Activated CD4-positive, alpha-beta T cell treated with anti-CD3 and anti-CD28 coated beads for 36 hours (primary cell): ENCODE measurements at regions of chr12 and their contacts with region 1.

Region 1: DNA sequence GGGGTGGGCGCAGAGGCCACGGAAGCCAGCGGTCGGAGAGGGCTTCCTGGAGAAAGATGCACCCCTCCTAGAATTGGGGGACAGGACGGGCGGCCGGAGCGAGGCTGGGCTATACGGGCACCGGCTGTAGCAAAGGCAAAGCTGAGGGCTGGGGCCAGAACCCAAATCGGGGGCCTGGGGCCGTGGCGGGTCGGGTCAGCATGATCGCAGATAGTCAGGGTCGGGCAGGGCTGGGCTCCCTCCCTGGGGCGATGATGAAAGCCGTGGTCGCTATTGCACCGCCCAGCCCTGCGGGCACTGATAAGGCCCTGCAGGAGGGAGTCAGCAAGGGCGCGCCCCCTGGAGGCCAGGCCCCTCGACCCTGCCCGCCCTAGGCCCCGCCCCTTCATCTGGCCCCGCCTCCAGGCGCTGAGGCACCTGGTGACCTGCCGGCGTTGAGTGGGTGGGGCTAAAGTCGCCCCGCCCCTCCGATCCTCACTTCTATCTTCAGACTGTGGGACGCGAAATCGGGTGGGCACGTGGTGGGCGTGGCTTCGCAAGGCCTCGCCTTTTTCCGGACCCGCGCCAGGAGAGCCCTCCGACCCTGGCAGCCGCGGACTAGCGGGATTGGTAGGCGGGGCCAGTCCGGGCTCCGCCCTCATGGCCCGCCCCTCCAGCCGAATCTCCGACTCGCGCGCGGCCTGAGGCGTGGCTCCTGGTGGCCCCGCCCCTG is 418 bp upstream of the SH2B3 start:
- DNase-seq: peak; percentile 100
- ATAC-seq: peak; percentile 77
- H3K4me3 Mint-ChIP-seq: peak overlapping the region; percentile 76
- H3K27ac Mint-ChIP-seq: peak overlapping the region; percentile 96
- H3K4me1 Mint-ChIP-seq: peaks cover 51% of the 10 kb centered on the region
- H3K27me3 Mint-ChIP-seq: no peaks in the 10 kb centered on the region

Region 2: DNA sequence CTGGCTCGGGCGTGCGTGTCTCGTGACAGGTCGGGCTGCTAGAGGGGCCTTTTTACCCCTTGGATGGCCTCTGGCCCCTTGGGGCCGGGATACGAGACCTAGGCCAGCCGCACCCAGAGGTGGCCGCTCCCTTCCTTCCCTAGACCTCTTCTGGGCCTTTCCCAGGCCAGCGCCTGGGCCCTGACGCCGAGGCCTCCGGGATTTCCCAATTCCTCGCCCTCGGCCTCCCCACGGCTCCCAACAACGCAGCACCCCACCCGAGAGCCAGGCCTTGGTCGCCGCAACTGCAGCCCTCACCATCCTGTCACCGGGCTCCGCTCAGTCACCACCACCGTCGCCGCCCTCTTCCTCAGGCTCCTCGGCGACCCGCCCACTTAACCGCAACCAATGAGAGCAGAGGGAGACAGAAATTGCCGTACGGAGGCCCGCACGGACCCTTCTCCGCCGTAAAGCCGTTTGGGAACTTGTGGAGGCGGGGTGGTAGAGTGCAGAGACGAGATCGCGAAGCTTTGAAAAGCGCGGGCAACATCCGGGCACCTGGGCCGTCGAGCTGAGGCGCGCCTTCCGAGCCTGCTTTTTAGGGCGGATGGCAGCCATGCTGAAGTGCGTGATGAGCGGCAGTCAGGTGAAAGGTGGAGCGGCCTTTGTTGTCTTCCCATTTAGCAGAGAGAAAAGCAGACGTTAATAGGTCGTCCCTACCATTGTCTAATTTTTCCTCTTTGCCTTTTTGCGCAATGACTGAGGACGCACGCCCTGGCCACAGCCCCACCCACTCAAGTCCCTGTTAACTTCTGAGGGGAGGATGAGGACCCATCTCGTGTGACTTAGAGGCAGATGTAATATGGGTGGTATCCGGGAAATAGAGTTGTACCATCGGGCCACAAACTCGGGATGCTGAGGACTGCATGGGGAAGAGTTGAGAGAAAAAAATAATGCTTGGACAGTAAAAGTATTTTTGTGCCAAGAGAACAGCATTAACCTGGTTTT is 903.3 kb before region 1 on chr12 and contains the starts of genes RAD9B and VPS29:
- CTCF ChIA-PET with region 1: no interaction called
- POLR2A ChIA-PET with region 1: no interaction called
- intact Hi-C with region 1: loop called (anchors 1 to 10 kb)
- DNase-seq: peak; percentile 100
- ATAC-seq: peak; percentile 97
- H3K4me3 Mint-ChIP-seq: peak within 1 kb of the TSS; percentile 95
- H3K27ac Mint-ChIP-seq: peak within 1 kb of the TSS; percentile 94
- H3K4me1 Mint-ChIP-seq: peaks cover 28% of the 10 kb centered on the region
- H3K27me3 Mint-ChIP-seq: no peaks in the 10 kb centered on the region
- total RNA-seq, gene RAD9B: 1.5 to 2.2 TPM
- total RNA-seq, gene VPS29: 84.4 to 103 TPM

Region 3: GRCh38 chr12:111434680-111435338 is 29.5 kb after region 1 on chr12:
- CTCF ChIA-PET with region 1: interaction called, 10 read pairs
- POLR2A ChIA-PET with region 1: interaction called, 7 read pairs
- intact Hi-C with region 1: loop called (anchors 1 kb)
- DNase-seq: peak; percentile 88
- ATAC-seq: peak; percentile 80
- H3K4me3 Mint-ChIP-seq: peak overlapping the region; percentile 35
- H3K27ac Mint-ChIP-seq: peak overlapping the region; percentile 81
- H3K4me1 Mint-ChIP-seq: peaks cover 89% of the 10 kb centered on the region
- H3K27me3 Mint-ChIP-seq: no peaks in the 10 kb centered on the region

Region 4: GRCh38 chr12:111546758-111547383 is 141.6 kb after region 1 on chr12:
- CTCF ChIA-PET with region 1: no interaction called
- POLR2A ChIA-PET with region 1: no interaction called
- intact Hi-C with region 1: loop called (anchors 2 to 5 kb)
- DNase-seq: peak; percentile 57
- ATAC-seq: peak; percentile 90
- H3K4me3 Mint-ChIP-seq: peak overlapping the region; percentile 13
- H3K27ac Mint-ChIP-seq: peak overlapping the region; percentile 81
- H3K4me1 Mint-ChIP-seq: peaks cover 28% of the 10 kb centered on the region
- H3K27me3 Mint-ChIP-seq: no peaks in the 10 kb centered on the region

Region 5: DNA sequence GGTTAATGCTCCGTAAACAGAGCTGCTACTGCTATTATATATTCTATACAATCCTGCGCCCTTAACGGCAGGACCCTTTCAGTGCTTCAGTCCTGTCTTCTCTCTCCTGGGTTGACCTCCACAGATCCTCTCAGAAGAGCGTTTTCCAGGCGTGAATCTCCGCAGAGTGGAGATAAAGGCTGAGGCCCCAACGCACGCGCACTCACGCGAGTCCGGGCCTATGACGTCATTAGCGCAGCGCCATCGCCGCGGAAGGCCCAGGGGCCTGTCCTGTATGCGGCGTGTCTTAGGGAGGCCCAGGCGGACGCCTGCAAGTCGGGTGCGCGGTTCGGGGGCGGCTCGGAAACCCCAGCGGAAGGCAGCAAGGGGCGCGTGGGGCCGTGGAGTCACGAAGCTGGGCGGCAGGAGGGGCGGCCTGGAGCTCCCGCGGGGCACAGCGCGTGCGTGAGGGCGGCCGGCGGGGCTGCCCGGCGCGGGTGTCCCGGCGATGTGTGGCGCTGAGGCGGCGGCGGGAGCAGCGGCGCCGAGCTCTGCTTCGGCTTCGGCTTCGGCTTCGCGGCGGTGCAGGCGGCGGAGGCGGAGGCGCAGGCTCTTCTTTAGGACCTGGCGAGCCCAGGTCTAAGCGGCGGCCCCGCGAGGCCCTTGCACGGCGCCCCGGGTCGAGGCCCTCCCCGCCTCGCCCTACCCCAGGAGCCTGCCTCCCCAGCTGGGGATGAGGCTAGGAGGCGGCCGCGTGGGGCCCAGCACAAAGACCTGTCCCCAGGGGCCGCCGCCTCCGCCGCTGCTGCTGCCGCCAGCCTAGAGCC is 436.6 kb after region 1 on chr12 and contains the start of gene MAPKAPK5:
- CTCF ChIA-PET with region 1: no interaction called
- POLR2A ChIA-PET with region 1: no interaction called
- intact Hi-C with region 1: loop called in 1 of 2 experiments (anchors 1 kb)
- DNase-seq: peak; percentile 97
- ATAC-seq: peak; percentile 81
- H3K4me3 Mint-ChIP-seq: peak within 1 kb of the TSS; percentile 87
- H3K27ac Mint-ChIP-seq: peak within 1 kb of the TSS; percentile 96
- H3K4me1 Mint-ChIP-seq: peaks cover 50% of the 10 kb centered on the region
- H3K27me3 Mint-ChIP-seq: no peaks in the 10 kb centered on the region
- total RNA-seq, gene MAPKAPK5: 47.5 to 57.5 TPM

Region 6: GRCh38 chr12:112108201-112109079 is 703.1 kb after region 1 on chr12 and contains the start of gene NAA25:
- CTCF ChIA-PET with region 1: no interaction called
- POLR2A ChIA-PET with region 1: no interaction called
- intact Hi-C with region 1: loop called in 1 of 2 experiments (anchors 5 kb)
- DNase-seq: peak; percentile 94
- ATAC-seq: peak; percentile 80
- H3K4me3 Mint-ChIP-seq: peak within 1 kb of the TSS; percentile 97
- H3K27ac Mint-ChIP-seq: peak within 1 kb of the TSS; percentile 99
- H3K4me1 Mint-ChIP-seq: peaks cover 55% of the 10 kb centered on the region
- H3K27me3 Mint-ChIP-seq: no peaks in the 10 kb centered on the region
- total RNA-seq, gene NAA25: 50.9 to 58.5 TPM